MCF 10A (cell line): ENCODE measurements at regions of chr13 and their contacts with region 1.

Region 1: GRCh38 chr13:75482070-75482819 is at the start of gene TBC1D4:
- DNase-seq: peak; percentile 92
- H3K4me3 Mint-ChIP-seq: peak within 1 kb of the TSS; percentile 81
- H3K27ac Mint-ChIP-seq: peak within 1 kb of the TSS; percentile 47
- H3K4me1 Mint-ChIP-seq: no peaks in the 10 kb centered on the region
- H3K27me3 Mint-ChIP-seq: no peaks in the 10 kb centered on the region
- CTCF ChIP-seq: peak; percentile 61
- total RNA-seq, gene TBC1D4: 6.6 and 9.3 TPM in 2 replicates

Region 2: DNA sequence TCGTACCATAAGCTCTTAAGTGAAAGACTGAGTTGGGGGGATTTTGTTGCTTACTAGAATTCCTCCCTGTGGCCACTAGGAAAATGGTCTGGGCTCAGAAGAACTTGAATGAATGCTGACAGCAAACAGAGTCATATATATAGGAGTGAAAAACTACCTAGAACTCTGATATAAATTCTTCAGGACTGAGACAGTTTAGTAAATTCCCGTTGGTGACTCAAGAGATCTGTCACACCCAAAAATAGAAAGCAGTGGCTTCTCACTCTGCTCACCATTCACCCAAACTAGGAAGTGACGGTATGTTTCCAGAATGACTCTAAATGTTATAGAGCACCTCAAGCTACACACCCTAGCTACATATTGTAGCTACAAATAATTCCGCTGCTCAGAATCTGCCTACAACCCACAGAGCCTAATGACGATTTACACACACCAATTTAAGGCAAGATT is 116.5 kb before region 1 on chr13:
- CTCF ChIA-PET with region 1: interaction called, 176 read pairs
- POLR2A ChIA-PET with region 1: interaction called, 40 read pairs
- intact Hi-C with region 1: no loop called
- DNase-seq: peak; percentile 69
- H3K4me3 Mint-ChIP-seq: peak overlapping the region; percentile 44
- H3K27ac Mint-ChIP-seq: peak overlapping the region; percentile 82
- H3K4me1 Mint-ChIP-seq: peaks cover 40% of the 10 kb centered on the region
- H3K27me3 Mint-ChIP-seq: no peaks in the 10 kb centered on the region
- CTCF ChIP-seq: peak; percentile 9

Region 3: DNA sequence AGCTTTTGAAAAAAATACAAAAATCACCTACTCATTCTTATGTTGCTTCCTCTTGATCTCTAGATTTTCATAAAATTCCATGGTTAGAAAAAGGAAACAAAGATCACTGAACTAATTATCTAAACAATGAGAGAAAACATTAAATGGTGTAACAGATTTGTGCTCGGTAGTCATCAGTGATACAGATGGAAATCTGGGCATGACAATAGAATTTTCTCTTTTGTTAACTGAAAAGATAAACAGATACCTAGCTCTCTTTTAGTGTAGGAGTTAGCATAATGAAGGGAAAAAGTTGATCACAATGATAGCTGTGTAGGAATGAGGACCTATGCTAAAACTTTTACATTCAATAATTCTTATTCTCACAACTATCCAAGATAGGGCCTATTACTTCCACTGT is 103.9 kb before region 1 on chr13:
- CTCF ChIA-PET with region 1: interaction called, 176 read pairs
- POLR2A ChIA-PET with region 1: interaction called, 40 read pairs
- intact Hi-C with region 1: no loop called
- DNase-seq: no peak
- H3K4me3 Mint-ChIP-seq: no peak overlapping the region
- H3K27ac Mint-ChIP-seq: no peak overlapping the region
- H3K4me1 Mint-ChIP-seq: no peaks in the 10 kb centered on the region
- H3K27me3 Mint-ChIP-seq: no peaks in the 10 kb centered on the region
- CTCF ChIP-seq: no peak

Region 4: GRCh38 chr13:75432045-75432444 is 50.2 kb before region 1 on chr13:
- CTCF ChIA-PET with region 1: interaction called, 4 read pairs
- POLR2A ChIA-PET with region 1: interaction called, 10 read pairs
- intact Hi-C with region 1: no loop called
- DNase-seq: no peak
- H3K4me3 Mint-ChIP-seq: no peak overlapping the region
- H3K27ac Mint-ChIP-seq: no peak overlapping the region
- H3K4me1 Mint-ChIP-seq: peaks cover 14% of the 10 kb centered on the region
- H3K27me3 Mint-ChIP-seq: no peaks in the 10 kb centered on the region
- CTCF ChIP-seq: no peak

Region 5: DNA sequence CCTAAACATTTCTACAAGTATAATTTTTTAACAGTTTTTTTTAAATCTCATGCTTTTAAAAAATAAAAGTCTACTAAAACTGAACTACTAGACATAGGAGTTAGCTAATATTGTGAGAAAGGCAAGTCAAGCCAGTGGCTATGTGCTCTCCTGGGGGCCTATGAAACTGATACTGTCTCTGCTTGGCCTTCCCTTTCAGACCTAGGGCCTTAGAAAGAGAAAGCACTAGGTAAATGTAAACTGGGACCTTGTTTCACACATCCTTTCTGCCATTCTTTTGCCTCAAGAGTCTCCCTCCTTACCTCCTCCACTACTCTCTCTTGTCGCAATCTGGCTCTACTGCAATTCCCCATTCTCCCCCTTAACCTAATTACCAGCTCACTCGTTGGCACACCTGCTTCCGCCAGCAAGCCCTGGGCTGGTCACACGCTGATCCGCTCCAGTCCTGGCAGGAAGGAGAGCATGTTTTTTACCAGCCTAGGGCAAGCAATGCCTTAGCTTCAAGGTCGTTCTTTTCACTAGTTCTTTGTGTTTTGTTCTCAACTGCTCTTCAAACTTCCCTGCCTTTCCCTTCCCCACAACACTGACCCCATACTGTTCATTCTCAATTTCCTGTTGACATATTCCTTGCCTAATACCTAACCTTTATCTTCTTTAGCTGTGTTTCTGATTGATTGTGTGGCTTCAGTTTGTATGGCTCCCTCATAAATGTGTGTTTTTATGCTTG is 23.4 kb before region 1 on chr13:
- CTCF ChIA-PET with region 1: interaction called, 11 read pairs
- POLR2A ChIA-PET with region 1: interaction called, 16 read pairs
- intact Hi-C with region 1: no loop called
- DNase-seq: no peak
- H3K4me3 Mint-ChIP-seq: no peak overlapping the region
- H3K27ac Mint-ChIP-seq: peak overlapping the region; percentile 3
- H3K4me1 Mint-ChIP-seq: peaks cover 30% of the 10 kb centered on the region
- H3K27me3 Mint-ChIP-seq: no peaks in the 10 kb centered on the region
- CTCF ChIP-seq: no peak

Region 6: DNA sequence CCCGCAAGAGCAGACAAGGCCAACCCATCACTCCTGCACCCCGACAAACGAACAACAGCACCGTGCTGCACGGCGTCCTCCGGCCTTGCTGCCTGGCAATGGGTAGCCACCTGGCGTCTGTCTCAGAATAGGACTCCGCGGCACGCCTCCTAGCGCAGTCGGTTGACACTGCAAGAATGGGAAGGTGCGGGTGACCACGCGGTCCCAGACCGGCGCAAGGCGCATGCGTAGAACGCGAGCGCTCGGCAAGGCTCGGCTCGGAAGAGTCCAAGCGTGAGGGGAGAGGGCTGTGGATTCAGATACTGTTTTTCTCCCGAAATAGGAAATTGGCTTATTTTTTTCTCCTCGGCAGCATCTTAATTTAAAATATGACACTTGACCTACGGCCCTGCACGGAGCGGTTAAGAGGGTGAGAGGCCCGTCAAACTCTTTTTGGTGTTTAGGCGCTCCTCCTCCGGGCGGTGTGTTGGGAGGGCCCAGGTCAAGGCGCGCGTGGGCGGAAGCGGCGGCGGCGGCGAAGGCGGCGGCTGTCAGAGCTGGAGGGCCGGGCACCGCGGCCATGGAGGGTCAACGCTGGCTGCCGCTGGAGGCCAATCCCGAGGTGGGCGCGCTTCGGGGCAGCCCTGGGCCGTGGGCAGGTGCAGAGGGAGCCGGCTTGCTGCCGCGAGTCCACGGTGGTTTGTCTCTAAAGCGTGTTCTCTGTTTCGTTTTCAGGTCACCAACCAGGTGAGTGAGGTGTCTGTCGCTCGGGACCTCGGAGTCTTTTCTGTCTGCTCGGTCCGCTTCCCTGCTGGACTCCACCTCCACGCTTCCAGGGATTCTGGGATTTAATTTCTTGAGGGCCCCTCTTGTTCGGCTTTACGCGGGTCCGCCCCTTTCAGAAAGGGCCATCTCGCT is 67.3 kb after region 1 on chr13 and contains the start of gene UCHL3:
- CTCF ChIA-PET with region 1: interaction called, 11 read pairs
- POLR2A ChIA-PET with region 1: interaction called, 24 read pairs
- intact Hi-C with region 1: loop called (anchors 1 kb)
- DNase-seq: peak; percentile 96
- H3K4me3 Mint-ChIP-seq: peak within 1 kb of the TSS; percentile 86
- H3K27ac Mint-ChIP-seq: peak within 1 kb of the TSS; percentile 98
- H3K4me1 Mint-ChIP-seq: peaks cover 32% of the 10 kb centered on the region
- H3K27me3 Mint-ChIP-seq: no peaks in the 10 kb centered on the region
- CTCF ChIP-seq: peak; percentile 81
- total RNA-seq, gene UCHL3: 49.9 and 79.3 TPM in 2 replicates